ENCODE measurements at regions of chr18 and their contacts with region 1.

Region 1: DNA sequence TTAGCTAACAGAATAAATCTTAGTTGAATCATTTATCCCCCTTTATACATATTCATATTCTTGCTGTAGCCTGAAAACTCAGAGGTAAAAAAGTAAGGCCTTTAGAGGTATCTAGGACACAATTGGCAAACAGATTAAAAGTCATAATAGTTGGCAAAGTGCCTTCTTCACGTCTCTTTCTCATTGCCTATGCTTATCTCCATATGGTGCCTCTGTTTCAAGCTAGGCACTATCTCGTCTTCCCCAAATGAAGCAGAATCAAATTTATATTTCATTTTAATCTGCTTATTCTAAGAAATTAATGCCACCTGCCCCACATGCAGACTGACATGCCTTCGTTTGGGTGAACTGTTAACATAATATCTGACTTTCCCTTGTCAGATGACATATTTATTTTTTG is 245.4 kb downstream of the CDH2 start:
- DNase-seq: no peak
- ATAC-seq: no peak
- H3K4me3 ChIP-seq: no peak overlapping the region
- H3K27ac ChIP-seq: no peak overlapping the region
- H3K4me1 ChIP-seq: no peaks in the 10 kb centered on the region
- H3K27me3 ChIP-seq: no peaks in the 10 kb centered on the region
- CTCF ChIP-seq: no peak
- POLR2A ChIP-seq: no peak

Region 2: DNA sequence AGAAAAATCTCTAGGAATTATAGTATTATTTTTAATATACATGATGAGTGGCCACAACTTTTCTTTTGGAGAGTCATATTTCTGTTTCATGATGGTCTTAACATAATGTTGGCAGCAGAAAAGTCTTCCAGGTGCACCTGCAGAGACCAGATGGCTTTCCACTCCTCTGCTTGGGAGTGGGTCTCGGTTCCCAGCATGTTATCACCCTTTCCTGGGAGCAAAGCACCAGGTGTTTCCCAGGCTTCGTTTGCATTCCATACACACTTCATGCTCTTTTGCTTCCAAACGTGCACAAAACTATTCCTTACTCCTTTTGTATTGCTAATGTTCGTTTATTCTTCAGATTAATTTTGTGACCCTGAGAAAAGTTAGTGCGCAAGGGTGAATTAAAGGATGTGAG is 59.8 kb before region 1 on chr18:
- intact Hi-C with region 1: loop called in 1 of 10 experiments (anchors 10 kb)
- DNase-seq: no peak
- ATAC-seq: no peak
- H3K4me3 ChIP-seq: no peak overlapping the region
- H3K27ac ChIP-seq: no peak overlapping the region
- H3K4me1 ChIP-seq: no peaks in the 10 kb centered on the region
- H3K27me3 ChIP-seq: no peaks in the 10 kb centered on the region
- CTCF ChIP-seq: no peak
- POLR2A ChIP-seq: no peak